Activated naive CD4-positive, alpha-beta T cell treated with anti-CD3 and anti-CD28 coated beads, Interleukin-2, amount 10 ng/mL, durations not matched to agents 7 days and 5 days (primary cell): ENCODE measurements at regions of chr7 and their contacts with region 1.

Region 1: DNA sequence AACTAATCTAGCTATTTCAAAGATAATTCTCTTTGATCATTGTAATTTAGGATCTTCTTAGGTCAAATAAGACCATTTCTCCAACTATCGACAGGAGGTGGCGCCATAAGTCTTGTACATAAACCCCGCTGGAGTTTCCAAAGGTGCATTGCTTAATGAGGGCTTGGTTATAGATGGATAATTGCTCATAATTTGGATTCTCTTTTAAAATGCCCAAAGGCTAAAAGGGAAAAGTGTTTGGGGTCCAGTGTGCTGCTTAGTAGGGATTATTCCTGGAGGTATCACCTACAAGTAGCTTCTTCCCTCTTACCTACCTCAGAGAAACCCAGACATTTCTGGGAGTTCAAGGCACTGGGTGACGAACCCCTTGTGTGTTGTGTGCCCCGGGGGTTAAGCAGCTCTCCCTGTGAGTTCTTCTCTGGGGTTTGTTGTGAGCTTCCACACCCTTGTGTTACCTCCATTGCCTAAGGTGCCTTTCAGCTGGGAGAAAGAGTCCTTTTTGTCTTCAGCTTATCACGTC is 75.2 kb downstream of the PAXIP1 start:
- DNase-seq: peak; percentile 87
- H3K4me3 Mint-ChIP-seq: peak overlapping the region; percentile 90
- H3K27ac Mint-ChIP-seq: peak overlapping the region; percentile 97
- H3K4me1 Mint-ChIP-seq: peaks cover 22% of the 10 kb centered on the region
- H3K27me3 Mint-ChIP-seq: peaks cover 8% of the 10 kb centered on the region

Region 2: DNA sequence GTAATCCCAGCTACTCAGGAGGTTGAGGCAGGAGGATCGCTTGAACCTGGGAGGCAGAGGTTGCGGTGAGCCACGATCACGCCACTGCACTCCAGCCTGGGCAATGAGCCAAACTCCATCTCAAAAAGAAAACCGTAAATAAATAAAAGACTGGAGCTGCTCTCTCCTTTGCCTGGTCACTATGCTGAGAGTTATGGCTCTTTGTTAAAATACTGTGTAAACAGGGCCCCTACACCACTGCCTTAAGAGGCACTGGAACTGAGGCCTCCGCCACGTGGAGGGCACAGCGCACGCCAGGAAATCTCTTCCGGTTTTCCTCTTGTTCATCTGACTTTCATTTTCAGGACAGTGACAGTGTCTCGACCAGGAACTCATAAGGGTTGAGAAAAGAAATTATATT is 48.1 kb before region 1 on chr7:
- CTCF ChIA-PET with region 1: no interaction called
- DNase-seq: no peak
- H3K4me3 Mint-ChIP-seq: no peak overlapping the region
- H3K27ac Mint-ChIP-seq: no peak overlapping the region
- H3K4me1 Mint-ChIP-seq: no peaks in the 10 kb centered on the region
- H3K27me3 Mint-ChIP-seq: no peaks in the 10 kb centered on the region

Region 3: GRCh38 chr7:154942691-154943090 is 15.0 kb after region 1 on chr7:
- CTCF ChIA-PET with region 1: interaction called, 12 read pairs
- DNase-seq: no peak
- H3K4me3 Mint-ChIP-seq: no peak overlapping the region
- H3K27ac Mint-ChIP-seq: no peak overlapping the region
- H3K4me1 Mint-ChIP-seq: no peaks in the 10 kb centered on the region
- H3K27me3 Mint-ChIP-seq: no peaks in the 10 kb centered on the region

Region 4: GRCh38 chr7:154978017-154978416 is 50.3 kb after region 1 on chr7:
- CTCF ChIA-PET with region 1: no interaction called
- DNase-seq: no peak
- H3K4me3 Mint-ChIP-seq: no peak overlapping the region
- H3K27ac Mint-ChIP-seq: no peak overlapping the region
- H3K4me1 Mint-ChIP-seq: peaks cover 23% of the 10 kb centered on the region
- H3K27me3 Mint-ChIP-seq: no peaks in the 10 kb centered on the region

Region 5: GRCh38 chr7:155009570-155010157 is 82.0 kb after region 1 on chr7:
- CTCF ChIA-PET with region 1: interaction called, 27 read pairs
- DNase-seq: peak; percentile 57
- H3K4me3 Mint-ChIP-seq: no peak overlapping the region
- H3K27ac Mint-ChIP-seq: no peak overlapping the region
- H3K4me1 Mint-ChIP-seq: peaks cover 6% of the 10 kb centered on the region
- H3K27me3 Mint-ChIP-seq: peaks cover 4% of the 10 kb centered on the region

Region 6: GRCh38 chr7:155344600-155345433 is 417.1 kb after region 1 on chr7:
- CTCF ChIA-PET with region 1: interaction called, 46 read pairs
- DNase-seq: peak; percentile 83
- H3K4me3 Mint-ChIP-seq: peak overlapping the region; percentile 55
- H3K27ac Mint-ChIP-seq: no peak overlapping the region
- H3K4me1 Mint-ChIP-seq: peaks cover 5% of the 10 kb centered on the region
- H3K27me3 Mint-ChIP-seq: peaks cover 41% of the 10 kb centered on the region